ENCODE measurements at regions of chr14 and their contacts with region 1.

Region 1: GRCh38 chr14:69260861-69261564 is 1.1 kb downstream of the GALNT16 start:
- DNase-seq: no peak
- ATAC-seq: no peak; the same call in 1 of the 2 replicates
- H3K4me3 ChIP-seq: peak overlapping the region; percentile 2; the same call in 1 of the 2 replicates
- H3K27ac ChIP-seq: no peak overlapping the region
- H3K4me1 ChIP-seq: peaks cover 2% of the 10 kb centered on the region; the same call in 1 of the 2 replicates
- H3K27me3 ChIP-seq: peaks cover 60% of the 10 kb centered on the region
- CTCF ChIP-seq: peak; percentile 42
- POLR2A ChIP-seq: no peak
- RAD21 ChIP-seq: peak; percentile 31

Region 2: GRCh38 chr14:68506021-68506644 is 754.9 kb before region 1 on chr14:
- CTCF ChIA-PET with region 1: no interaction called
- POLR2A ChIA-PET with region 1: no interaction called
- dilution Hi-C with region 1: no loop called
- in situ Hi-C with region 1: no loop called
- intact Hi-C with region 1: no loop called
- DNase-seq: peak; percentile 73
- ATAC-seq: peak; percentile 61
- H3K4me3 ChIP-seq: no peak overlapping the region
- H3K27ac ChIP-seq: peak overlapping the region; percentile 58
- H3K4me1 ChIP-seq: peaks cover 22% of the 10 kb centered on the region
- H3K27me3 ChIP-seq: no peaks in the 10 kb centered on the region
- CTCF ChIP-seq: no peak
- POLR2A ChIP-seq: no peak
- RAD21 ChIP-seq: no peak

Region 3: GRCh38 chr14:69726761-69727511 is 465.9 kb after region 1 on chr14:
- CTCF ChIA-PET with region 1: no interaction called
- POLR2A ChIA-PET with region 1: no interaction called
- dilution Hi-C with region 1: no loop called
- in situ Hi-C with region 1: loop called (anchors 25 kb)
- intact Hi-C with region 1: no loop called
- DNase-seq: peak; percentile 58
- ATAC-seq: peak; percentile 97
- H3K4me3 ChIP-seq: peak overlapping the region; percentile 57
- H3K27ac ChIP-seq: peak overlapping the region; percentile 46
- H3K4me1 ChIP-seq: peaks cover 2% of the 10 kb centered on the region
- H3K27me3 ChIP-seq: no peaks in the 10 kb centered on the region
- CTCF ChIP-seq: peak; percentile 92
- POLR2A ChIP-seq: peak; percentile 67
- RAD21 ChIP-seq: peak; percentile 97

Measured in IMR-90 (cell line).